CD8-positive, alpha-beta T cell (primary cell): ENCODE measurements at regions of chr10 and their contacts with region 1.

Region 1: GRCh38 chr10:6163364-6164270 is 39.1 kb upstream of the PFKFB3 start:
- DNase-seq: peak; percentile 80 to 97 (median 92)
- ATAC-seq: peak; percentile 91
- H3K4me3 ChIP-seq: peak overlapping the region; percentile 76 to 81
- H3K4me3 Mint-ChIP-seq: peak overlapping the region; percentile 92
- H3K27ac ChIP-seq: peak overlapping the region; percentile 86 to 90
- H3K27ac Mint-ChIP-seq: peak overlapping the region; percentile 98
- H3K4me1 ChIP-seq: peaks cover 31% of the 10 kb centered on the region
- H3K4me1 Mint-ChIP-seq: peaks cover 54% of the 10 kb centered on the region
- H3K27me3 ChIP-seq: no peaks in the 10 kb centered on the region
- H3K27me3 Mint-ChIP-seq: no peaks in the 10 kb centered on the region
- CTCF ChIP-seq: no peak

Region 2: DNA sequence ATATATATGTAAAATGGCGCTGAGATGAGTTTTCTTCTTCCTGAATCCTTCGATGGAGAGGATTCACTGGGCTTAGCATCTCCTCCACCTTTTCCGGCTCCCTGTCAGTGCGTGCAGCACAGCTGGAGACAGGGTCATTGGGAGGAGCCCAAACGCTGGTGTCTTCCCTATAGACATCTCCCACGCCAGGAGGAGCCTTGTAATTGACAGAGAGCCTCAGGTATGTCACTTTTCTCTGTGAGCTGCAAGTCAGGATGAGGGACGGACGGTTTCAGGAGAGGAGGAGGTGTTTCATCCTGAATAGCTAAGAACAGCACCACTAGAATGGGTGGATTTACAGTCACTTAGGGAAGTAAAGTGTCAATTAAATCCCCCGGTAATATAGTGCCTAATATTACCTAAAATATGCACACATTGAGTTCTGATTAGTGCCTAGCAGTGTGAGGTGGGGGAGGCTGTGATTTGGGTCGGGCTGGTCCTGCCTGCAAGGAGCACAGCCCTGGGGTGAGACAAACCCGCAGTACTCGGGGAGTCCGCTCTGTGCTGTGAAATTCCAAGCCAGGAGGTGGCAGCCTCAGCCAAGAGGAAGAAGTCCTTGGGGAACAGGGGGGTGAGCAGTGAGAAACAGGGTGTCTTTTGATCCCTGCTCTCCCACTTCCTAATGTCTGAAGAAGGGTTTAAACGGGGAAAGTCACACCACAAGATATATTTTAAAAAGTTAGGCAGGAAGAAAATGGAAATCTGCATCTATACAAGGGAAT is 214.4 kb before region 1 on chr10:
- CTCF ChIA-PET with region 1: no interaction called
- POLR2A ChIA-PET with region 1: no interaction called
- intact Hi-C with region 1: no loop called
- DNase-seq: peak in 3 of 9 experiments; percentile 26 to 36 (median 34)
- ATAC-seq: no peak
- H3K4me3 ChIP-seq: no peak overlapping the region
- H3K4me3 Mint-ChIP-seq: no peak overlapping the region
- H3K27ac ChIP-seq: no peak overlapping the region
- H3K27ac Mint-ChIP-seq: no peak overlapping the region
- H3K4me1 ChIP-seq: no peaks in the 10 kb centered on the region
- H3K4me1 Mint-ChIP-seq: peaks cover 5% of the 10 kb centered on the region
- H3K27me3 ChIP-seq: no peaks in the 10 kb centered on the region
- H3K27me3 Mint-ChIP-seq: no peaks in the 10 kb centered on the region
- CTCF ChIP-seq: no peak

Region 3: GRCh38 chr10:6144406-6145165 is 19.0 kb before region 1 on chr10:
- CTCF ChIA-PET with region 1: interaction called, 6 read pairs
- POLR2A ChIA-PET with region 1: interaction called, 8 read pairs
- intact Hi-C with region 1: loop called (anchors 1 kb)
- DNase-seq: peak; percentile 73 to 93 (median 87)
- ATAC-seq: peak; percentile 90
- H3K4me3 ChIP-seq: peak overlapping the region; percentile 76 to 89
- H3K4me3 Mint-ChIP-seq: peak overlapping the region; percentile 84
- H3K27ac ChIP-seq: peak overlapping the region; percentile 71 to 75
- H3K27ac Mint-ChIP-seq: peak overlapping the region; percentile 83
- H3K4me1 ChIP-seq: peaks cover 54% of the 10 kb centered on the region
- H3K4me1 Mint-ChIP-seq: peaks cover 56% of the 10 kb centered on the region
- H3K27me3 ChIP-seq: no peaks in the 10 kb centered on the region
- H3K27me3 Mint-ChIP-seq: peaks cover 4% of the 10 kb centered on the region
- CTCF ChIP-seq: no peak

Region 4: GRCh38 chr10:6995831-6996230 is 832.2 kb after region 1 on chr10:
- CTCF ChIA-PET with region 1: no interaction called
- POLR2A ChIA-PET with region 1: no interaction called
- intact Hi-C with region 1: no loop called
- DNase-seq: no peak
- ATAC-seq: no peak
- H3K4me3 ChIP-seq: no peak overlapping the region
- H3K4me3 Mint-ChIP-seq: no peak overlapping the region
- H3K27ac ChIP-seq: no peak overlapping the region
- H3K27ac Mint-ChIP-seq: no peak overlapping the region
- H3K4me1 ChIP-seq: peaks cover 4% of the 10 kb centered on the region
- H3K4me1 Mint-ChIP-seq: peaks cover 6% of the 10 kb centered on the region
- H3K27me3 ChIP-seq: no peaks in the 10 kb centered on the region
- H3K27me3 Mint-ChIP-seq: peaks cover 2% of the 10 kb centered on the region
- CTCF ChIP-seq: no peak